ENCODE measurements at regions of chr19 and their contacts with region 1.

Region 1: DNA sequence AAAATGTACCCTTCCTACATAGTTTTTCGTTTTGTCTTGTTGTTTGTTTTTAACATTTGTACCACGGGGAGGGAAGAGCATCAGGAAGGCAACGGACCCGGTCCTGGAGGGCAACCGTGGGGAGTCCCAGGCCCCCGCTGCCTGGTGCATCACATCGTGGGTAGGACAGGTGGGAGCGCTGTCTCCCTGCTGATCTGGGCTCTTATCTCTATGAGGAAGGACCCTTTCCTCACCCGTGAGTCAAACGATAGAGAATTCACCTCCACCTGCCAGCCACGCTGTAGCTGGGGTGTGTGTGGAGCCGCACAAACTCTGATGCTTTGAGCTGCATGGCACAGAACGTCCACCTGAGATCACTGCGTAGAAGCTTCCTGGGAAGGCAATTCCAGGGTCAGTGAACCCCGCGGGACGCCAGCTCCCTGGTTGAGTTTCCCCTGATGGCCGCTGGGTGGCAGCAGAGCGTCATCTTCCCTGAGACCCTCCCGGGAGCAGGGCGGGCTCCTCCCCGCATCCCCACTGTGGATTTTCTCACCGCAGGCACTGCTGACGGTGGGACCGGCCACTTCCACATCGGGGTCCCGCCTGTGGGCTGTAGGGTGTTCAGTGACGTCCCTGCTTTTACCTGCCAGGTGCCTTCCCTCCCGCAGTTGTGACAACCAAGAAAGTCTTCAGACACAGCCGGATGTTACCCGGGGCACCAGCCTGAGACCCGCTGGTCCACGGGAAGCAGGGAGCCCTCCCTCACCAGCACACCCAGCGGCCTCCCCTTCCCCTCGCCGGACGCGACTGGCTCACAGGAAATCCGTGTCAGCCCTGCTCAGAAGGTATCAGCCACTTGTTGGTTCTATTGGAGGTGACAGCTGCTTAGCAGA is 54.7 kb downstream of the ZNF787 start:
- DNase-seq: peak; percentile 4
- H3K4me3 ChIP-seq: peak overlapping the region; percentile 39
- H3K27ac ChIP-seq: no peak overlapping the region
- H3K27me3 ChIP-seq: no peaks in the 10 kb centered on the region
- CTCF ChIP-seq: peak; percentile 83

Region 2: GRCh38 chr19:55857149-55857548 is 209.2 kb before region 1 on chr19:
- CTCF ChIA-PET with region 1: no interaction called
- POLR2A ChIA-PET with region 1: no interaction called
- DNase-seq: no peak
- H3K4me3 ChIP-seq: no peak overlapping the region
- H3K27ac ChIP-seq: no peak overlapping the region
- H3K27me3 ChIP-seq: no peaks in the 10 kb centered on the region
- CTCF ChIP-seq: no peak

Region 3: DNA sequence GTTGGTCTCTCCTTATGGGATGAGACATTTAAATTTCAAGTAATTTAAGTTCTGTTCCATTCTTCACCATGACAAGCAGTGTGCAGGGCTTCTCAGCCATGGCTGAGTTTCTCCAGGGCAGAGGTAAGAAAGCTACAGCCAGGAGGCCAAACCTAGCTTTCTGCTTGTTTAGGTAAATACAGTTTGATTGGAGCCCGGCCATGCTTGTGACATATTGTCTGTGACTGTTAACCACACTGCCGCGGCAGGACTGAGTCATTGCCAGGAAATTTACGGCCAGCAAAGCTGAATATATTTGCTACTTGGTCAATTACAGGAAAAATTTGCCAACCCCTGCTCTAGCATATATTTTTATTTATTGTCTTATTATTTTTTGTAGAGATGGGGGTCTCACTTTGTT is 108.0 kb before region 1 on chr19:
- CTCF ChIA-PET with region 1: no interaction called
- POLR2A ChIA-PET with region 1: no interaction called
- DNase-seq: no peak
- H3K4me3 ChIP-seq: no peak overlapping the region
- H3K27ac ChIP-seq: no peak overlapping the region
- H3K27me3 ChIP-seq: no peaks in the 10 kb centered on the region
- CTCF ChIP-seq: no peak

Region 4: DNA sequence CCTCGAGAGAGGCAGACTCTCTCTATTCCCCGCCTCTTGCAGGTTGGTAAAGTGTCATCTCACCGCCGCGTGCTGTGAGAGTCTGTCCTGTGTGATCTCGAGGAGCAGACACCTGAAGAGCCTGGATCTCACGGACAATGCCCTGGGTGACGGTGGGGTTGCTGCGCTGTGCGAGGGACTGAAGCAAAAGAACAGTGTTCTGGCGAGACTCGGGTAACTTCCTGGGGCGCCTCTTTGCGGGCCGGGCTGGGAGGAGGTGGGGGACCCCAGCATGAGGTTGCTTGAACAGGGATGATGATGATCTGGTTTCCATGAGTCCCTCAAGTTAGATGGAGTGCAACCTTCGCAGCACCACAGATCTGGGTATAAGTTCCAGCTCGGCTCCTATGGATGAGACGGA is 12.8 kb before region 1 on chr19:
- CTCF ChIA-PET with region 1: interaction called, 15 read pairs
- POLR2A ChIA-PET with region 1: no interaction called
- DNase-seq: no peak
- H3K4me3 ChIP-seq: no peak overlapping the region
- H3K27ac ChIP-seq: no peak overlapping the region
- H3K27me3 ChIP-seq: no peaks in the 10 kb centered on the region
- CTCF ChIP-seq: no peak

Region 5: DNA sequence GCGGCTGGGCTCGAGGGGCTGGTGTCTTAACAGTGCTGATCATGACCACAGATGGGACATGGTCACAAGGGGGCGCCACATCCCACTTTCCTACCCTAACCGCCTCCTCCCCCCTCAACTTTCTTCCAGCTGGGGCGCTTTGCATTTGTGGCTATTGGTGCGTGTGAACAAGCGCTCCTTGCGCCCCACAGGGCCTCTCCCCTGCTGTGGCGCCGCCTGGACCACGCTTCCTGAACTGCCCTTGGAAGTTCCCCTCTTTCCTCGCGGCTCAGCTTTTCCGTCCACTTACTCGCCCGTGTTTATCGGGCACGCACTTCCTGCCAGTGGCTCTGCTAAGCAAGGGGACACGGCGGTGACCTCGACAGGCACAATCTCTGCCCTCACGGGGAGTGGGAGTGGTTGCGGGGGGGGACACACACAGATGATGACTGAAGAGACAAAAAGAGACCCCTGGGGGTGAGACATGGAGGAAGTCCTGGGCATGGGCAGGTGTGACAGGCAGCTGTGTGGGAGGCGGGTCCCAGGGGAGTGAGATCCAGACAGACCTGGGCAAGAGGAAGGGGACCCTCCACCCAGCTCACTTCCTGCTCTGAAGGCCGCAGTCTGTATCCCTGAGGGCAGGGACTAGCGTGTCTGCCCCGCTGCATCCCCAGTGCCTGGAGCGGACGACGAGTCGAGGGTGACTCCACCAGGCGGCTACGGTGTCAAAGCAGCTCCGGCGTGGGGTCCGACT is 14.4 kb after region 1 on chr19:
- CTCF ChIA-PET with region 1: interaction called, 60 read pairs
- POLR2A ChIA-PET with region 1: no interaction called
- DNase-seq: peak; percentile 37
- H3K4me3 ChIP-seq: peak overlapping the region; percentile 49
- H3K27ac ChIP-seq: no peak overlapping the region
- H3K27me3 ChIP-seq: no peaks in the 10 kb centered on the region
- CTCF ChIP-seq: peak; percentile 68

Region 6: DNA sequence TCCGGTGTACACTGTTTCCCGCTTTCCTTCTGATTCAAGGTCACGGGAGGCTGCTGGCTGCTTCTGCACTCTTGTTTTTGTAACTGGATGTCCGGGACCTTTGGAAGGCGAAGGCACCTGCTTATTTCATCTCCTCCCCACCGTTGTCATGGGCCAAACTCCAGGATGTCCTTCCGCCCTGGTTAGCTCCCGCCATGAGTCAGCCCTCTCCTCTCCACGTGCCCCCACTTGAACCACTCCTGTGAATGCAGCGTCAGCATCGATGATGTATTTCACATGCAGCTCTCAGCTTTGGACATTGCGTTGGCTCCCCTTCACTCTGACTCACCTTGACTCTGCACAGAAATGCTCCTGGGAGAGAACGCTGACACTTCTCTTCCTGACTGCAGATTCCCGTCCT is 103.9 kb after region 1 on chr19:
- CTCF ChIA-PET with region 1: interaction called, 37 read pairs
- POLR2A ChIA-PET with region 1: no interaction called
- DNase-seq: no peak
- H3K4me3 ChIP-seq: no peak overlapping the region
- H3K27ac ChIP-seq: no peak overlapping the region
- H3K27me3 ChIP-seq: peaks cover 3% of the 10 kb centered on the region
- CTCF ChIP-seq: no peak

Region 7: GRCh38 chr19:56252699-56253422 is 186.5 kb after region 1 on chr19:
- CTCF ChIA-PET with region 1: interaction called, 33 read pairs
- POLR2A ChIA-PET with region 1: no interaction called
- DNase-seq: peak; percentile 33
- H3K4me3 ChIP-seq: no peak overlapping the region
- H3K27ac ChIP-seq: no peak overlapping the region
- H3K27me3 ChIP-seq: no peaks in the 10 kb centered on the region
- CTCF ChIP-seq: peak; percentile 86

Region 8: GRCh38 chr19:56299688-56300087 is 233.3 kb after region 1 on chr19:
- CTCF ChIA-PET with region 1: interaction called, 10 read pairs
- POLR2A ChIA-PET with region 1: no interaction called
- DNase-seq: no peak
- H3K4me3 ChIP-seq: no peak overlapping the region
- H3K27ac ChIP-seq: no peak overlapping the region
- H3K27me3 ChIP-seq: no peaks in the 10 kb centered on the region
- CTCF ChIP-seq: no peak